ENCODE measurements at regions of chr17 and their contacts with region 1.

Region 1: GRCh38 chr17:77054936-77055335 is 85.8 kb upstream of the SEC14L1 start:
- DNase-seq: no peak
- H3K4me3 ChIP-seq: no peak overlapping the region
- H3K27ac ChIP-seq: no peak overlapping the region
- H3K4me1 ChIP-seq: no peaks in the 10 kb centered on the region
- H3K27me3 ChIP-seq: no peaks in the 10 kb centered on the region
- CTCF ChIP-seq: no peak

Region 2: GRCh38 chr17:77036807-77037381 is 18.0 kb before region 1 on chr17:
- CTCF ChIA-PET with region 1: interaction called, 10 read pairs
- dilution Hi-C with region 1: no loop called
- in situ Hi-C with region 1: no loop called
- intact Hi-C with region 1: loop called (anchors 1 kb)
- DNase-seq: peak; percentile 55
- H3K4me3 ChIP-seq: no peak overlapping the region
- H3K27ac ChIP-seq: no peak overlapping the region
- H3K4me1 ChIP-seq: no peaks in the 10 kb centered on the region
- H3K27me3 ChIP-seq: peaks cover 4% of the 10 kb centered on the region
- CTCF ChIP-seq: peak; percentile 9 to 39